Dorsolateral prefrontal cortex (tissue), 120 donors: ENCODE measurements at regions of chr22 and their contacts with region 1.

Region 1: DNA sequence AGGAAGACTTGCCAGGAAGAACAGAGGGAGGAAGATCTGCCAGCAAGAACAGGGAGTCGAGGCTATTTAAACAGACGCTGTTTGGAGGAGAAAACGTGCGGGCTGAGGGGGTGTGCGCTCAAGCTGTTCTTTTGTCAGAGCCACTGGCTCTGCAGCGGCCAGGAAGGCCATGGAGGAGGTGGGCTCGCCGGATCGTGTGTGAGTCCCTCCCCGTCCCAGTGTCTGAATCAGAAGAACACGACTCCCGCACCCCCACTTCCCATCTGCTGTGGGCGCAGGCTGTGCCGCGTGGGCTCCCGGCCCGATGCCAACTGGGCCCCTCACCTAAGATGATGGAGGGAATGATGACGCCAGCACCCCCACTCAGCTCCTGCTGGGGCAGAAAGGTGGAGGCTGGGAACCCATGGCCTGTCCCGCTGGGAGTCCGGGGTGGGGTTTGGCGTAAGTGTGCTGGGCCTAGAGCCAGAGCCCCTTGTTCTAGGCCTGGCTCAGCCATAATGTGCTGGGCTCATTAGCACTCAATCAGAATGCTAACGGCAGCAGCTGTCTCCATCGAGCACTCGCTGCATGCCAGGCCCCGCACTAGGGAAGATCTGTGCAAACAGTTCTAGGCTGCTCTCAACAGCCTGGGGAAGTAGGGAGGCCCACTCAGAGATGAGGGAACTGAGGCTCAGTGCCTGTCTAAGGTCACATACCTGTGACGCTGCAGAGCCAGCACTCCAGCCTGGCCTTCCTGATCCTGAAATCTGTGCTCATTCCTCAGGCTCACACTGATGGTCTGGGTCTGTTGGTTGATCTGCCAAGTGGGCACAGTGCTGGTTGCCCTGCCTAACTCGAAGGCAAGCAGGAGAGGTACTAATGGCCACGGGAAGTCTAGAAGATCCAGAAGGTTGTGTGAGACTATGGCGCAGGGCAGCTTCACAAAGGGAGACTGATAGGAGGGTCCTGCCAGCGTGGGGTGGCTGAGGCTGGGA is 11.5 kb downstream of the NPTXR start:
- DNase-seq: peak in 9 of 10 donors; percentile 33 to 81 (median 74)
- H3K4me3 ChIP-seq: peak overlapping the region in 2 of 59 donors; percentile 1 to 5
- H3K27ac ChIP-seq: peak overlapping the region in 51 of 59 donors; percentile 18 to 87 (median 64)
- H3K27me3 ChIP-seq: no peaks in the 10 kb centered on the region
- CTCF ChIP-seq: no peak

Region 2: GRCh38 chr22:38782402-38783094 is 49.7 kb before region 1 on chr22:
- intact Hi-C with region 1: loop called (anchors 1 to 2 kb)
- DNase-seq: peak in 4 of 10 donors; percentile 77 to 87 (median 84)
- H3K4me3 ChIP-seq: peak overlapping the region in 9 of 59 donors; percentile 7 to 20 (median 11)
- H3K27ac ChIP-seq: peak overlapping the region in 36 of 59 donors; percentile 3 to 78 (median 55)
- H3K27me3 ChIP-seq: no peaks in the 10 kb centered on the region
- CTCF ChIP-seq: no peak

Region 3: DNA sequence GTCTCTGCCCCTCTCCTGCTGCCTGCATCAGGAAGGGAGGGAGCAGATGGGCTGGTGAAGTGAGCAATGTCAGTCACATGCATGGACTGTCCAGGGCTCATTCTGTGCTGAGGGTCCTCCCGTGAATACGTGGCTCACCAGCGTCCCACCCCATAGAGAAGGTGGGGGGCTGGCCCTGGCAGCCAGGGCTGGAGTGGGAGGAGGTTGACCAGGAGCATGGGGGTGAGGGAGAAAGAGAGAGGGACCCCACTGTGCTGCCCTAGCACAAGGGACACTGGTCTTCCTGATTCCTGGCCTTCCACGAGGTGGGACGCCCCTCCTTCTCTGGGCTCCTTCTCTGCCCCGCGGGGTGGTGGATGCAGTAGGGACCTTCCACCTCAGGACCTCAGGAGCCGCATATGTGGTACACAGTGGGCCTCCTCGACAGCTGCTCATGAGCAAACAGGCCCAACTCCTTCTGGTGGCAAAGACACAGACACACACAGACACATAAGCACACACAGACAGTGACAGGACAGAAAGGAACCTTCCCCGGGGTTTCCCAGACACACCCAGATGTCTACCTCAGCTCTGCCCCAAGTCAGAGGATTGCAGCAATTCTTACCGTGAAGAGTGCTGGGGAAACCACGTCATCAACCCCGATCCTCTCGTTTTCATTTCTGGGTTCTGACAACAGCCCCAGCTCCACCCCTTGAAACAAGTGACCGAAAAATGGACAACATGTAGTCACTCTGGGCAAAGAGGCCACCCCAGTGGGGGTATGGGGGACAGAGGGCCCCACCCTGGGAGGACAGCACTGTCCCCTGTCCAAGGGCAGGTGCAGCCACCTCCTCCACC is 121.5 kb after region 1 on chr22:
- intact Hi-C with region 1: no loop called
- DNase-seq: peak in 1 of 10 donors; percentile 28
- H3K4me3 ChIP-seq: no peak overlapping the region
- H3K27ac ChIP-seq: peak overlapping the region in 1 of 59 donors; percentile 18
- H3K27me3 ChIP-seq: peaks cover 0 to 4% (median 0%) of the 10 kb centered on the region in 45 donors
- CTCF ChIP-seq: no peak